ENCODE measurements at regions of chr20 and their contacts with region 1.

Region 1: DNA sequence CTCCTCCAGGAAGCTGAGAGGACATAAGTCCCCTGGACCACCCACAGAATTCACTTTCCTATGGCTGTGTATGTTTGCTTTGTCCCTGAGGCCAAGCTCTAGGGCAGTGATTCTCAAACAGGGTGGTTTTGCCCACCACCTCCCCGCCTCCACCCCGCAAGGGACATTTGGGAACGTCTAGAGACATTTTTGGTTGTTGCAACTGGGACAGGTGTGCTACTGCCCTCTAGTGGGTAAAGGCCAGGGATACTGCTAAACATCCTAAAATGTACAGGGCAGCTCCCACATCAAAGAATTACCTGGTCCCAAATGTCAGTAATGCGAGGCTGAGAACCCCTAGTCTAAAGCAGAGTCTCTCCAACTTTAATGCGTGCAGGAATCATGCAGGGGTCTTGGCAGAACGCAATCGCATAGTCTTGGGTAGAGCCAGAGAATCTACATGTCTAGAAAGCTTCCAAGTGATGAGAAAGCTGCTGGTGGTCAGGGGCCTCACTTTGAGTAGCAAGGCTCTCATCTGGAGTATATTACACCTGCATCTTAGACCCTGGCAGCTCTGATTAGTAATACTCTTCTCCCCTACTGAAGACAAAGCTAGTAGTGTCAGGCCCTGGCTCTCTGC is 5.1 kb downstream of the KCNS1 start:
- DNase-seq: peak; percentile 76
- ATAC-seq: peak; percentile 44
- H3K4me3 Mint-ChIP-seq: no peak overlapping the region
- H3K27ac Mint-ChIP-seq: no peak overlapping the region
- H3K4me1 Mint-ChIP-seq: peaks cover 11% of the 10 kb centered on the region
- H3K27me3 Mint-ChIP-seq: peaks cover 30% of the 10 kb centered on the region

Region 2: GRCh38 chr20:44683263-44684046 is 412.4 kb before region 1 on chr20:
- CTCF ChIA-PET with region 1: interaction called, 5 read pairs
- POLR2A ChIA-PET with region 1: no interaction called
- intact Hi-C with region 1: loop called in 1 of 2 experiments (anchors 10 kb)
- DNase-seq: peak; percentile 69
- ATAC-seq: peak; percentile 79
- H3K4me3 Mint-ChIP-seq: no peak overlapping the region
- H3K27ac Mint-ChIP-seq: no peak overlapping the region
- H3K4me1 Mint-ChIP-seq: no peaks in the 10 kb centered on the region
- H3K27me3 Mint-ChIP-seq: no peaks in the 10 kb centered on the region

Region 3: DNA sequence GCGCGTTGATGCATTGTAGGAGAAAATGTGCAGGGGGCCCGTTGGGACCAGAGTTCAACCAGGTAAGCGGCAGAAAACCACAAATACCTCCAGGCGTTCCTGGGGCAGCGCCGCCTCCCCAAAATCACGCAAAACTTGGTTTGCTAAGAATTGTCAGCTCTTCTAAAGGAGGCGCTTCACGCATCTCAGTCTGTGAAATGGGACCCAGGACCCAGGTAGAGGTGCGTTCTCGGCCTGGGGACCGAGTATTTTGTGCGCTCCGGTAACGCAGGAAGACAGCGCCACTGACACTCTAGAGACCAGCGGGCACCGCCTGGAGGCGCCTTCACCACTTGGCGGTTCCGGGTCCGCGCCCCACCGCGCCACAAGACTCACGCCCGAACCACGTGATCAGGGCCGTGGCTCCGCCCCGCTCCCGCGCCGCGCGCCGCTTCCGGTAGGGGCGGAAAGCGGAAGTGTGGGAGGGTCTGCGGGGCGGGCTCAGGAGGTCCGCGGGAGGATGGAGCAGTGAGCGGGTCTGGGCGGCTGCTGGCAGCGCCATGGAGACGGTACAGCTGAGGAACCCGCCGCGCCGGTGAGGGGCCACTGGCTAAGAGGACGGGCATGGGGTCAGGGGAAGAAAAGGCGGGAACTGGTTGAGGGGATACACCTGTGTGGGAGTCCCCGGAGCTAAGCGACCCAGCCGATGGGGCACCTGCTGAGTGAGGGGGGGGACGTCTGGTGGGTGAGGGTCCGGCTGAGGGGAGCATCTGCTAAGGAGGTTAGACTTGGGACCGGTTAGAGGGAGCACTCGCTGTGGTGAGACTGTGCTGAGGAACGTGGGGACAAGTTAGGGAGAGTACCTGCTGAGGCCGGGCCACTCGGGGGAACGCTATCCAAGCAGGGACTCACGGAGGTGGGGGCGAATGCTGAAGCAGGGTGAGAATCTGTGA is 129.6 kb before region 1 on chr20 and contains the start of gene STK4:
- CTCF ChIA-PET with region 1: no interaction called
- POLR2A ChIA-PET with region 1: interaction called, 3 read pairs
- intact Hi-C with region 1: loop called in 1 of 2 experiments (anchors 5 kb)
- DNase-seq: peak; percentile 97
- ATAC-seq: peak; percentile 71
- H3K4me3 Mint-ChIP-seq: peak within 1 kb of the TSS; percentile 94
- H3K27ac Mint-ChIP-seq: peak within 1 kb of the TSS; percentile 98
- H3K4me1 Mint-ChIP-seq: peaks cover 55% of the 10 kb centered on the region
- H3K27me3 Mint-ChIP-seq: no peaks in the 10 kb centered on the region
- total RNA-seq, gene STK4: 156 to 164 TPM

Region 4: DNA sequence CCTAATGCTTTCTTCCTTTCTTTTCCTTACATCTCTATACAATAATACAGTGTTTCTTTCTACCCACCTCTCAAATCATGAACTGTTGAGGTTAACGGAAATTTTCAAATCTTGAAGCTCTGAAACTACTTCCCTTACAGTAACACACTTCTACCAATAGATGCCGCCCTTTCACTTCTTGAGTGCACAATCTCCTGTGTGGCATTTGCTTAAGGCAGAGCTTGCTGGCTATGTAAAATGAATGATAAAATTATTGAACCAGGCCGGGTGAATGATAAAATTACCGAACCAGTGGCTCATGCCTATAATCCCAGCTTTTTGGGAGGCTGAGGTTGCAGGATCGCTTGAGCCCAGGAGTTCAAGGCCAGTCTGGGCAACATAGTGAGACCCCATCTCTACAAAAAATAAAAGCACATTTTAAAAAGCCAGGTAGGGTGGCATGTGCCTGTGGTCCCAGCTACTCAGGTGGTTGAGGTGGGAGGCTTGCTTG is 51.7 kb before region 1 on chr20:
- CTCF ChIA-PET with region 1: interaction called, 136 read pairs
- POLR2A ChIA-PET with region 1: interaction called, 7 read pairs
- intact Hi-C with region 1: loop called (anchors 1 kb)
- DNase-seq: peak; percentile 52
- ATAC-seq: peak; percentile 86
- H3K4me3 Mint-ChIP-seq: no peak overlapping the region
- H3K27ac Mint-ChIP-seq: peak overlapping the region; percentile 93
- H3K4me1 Mint-ChIP-seq: peaks cover 76% of the 10 kb centered on the region
- H3K27me3 Mint-ChIP-seq: no peaks in the 10 kb centered on the region

Region 5: DNA sequence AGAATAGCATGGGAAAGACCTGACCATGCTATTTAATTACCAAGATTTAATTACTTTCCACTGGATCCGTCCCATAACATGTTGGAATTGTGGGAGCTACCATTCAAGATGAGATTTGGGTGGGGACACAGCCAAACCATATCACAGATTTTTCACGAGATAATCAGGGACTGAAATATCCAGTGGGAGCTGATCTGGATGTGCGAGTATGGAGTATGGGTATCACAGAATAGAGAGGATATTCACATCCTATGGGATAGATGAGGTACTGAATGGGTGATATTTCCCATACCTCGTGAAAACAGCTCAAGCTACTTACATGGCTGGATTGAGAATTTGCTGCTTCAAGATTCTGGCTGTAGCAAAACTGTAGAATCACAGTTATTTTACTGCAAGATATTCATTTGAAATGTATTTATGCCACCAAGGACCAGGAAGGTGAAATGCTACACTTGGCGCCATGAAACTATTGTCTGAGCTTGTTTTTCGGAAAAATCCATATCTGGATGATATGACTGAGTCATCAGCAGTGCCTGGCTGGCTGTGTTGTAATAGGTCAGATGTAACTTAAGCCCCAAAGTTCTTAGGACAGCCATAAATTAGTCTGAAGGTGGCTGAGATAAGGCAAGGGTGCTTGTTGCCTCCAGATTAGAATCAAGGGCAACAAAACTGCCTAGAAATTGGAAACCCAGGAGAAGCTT is 24.8 kb before region 1 on chr20:
- CTCF ChIA-PET with region 1: interaction called, 29 read pairs
- POLR2A ChIA-PET with region 1: no interaction called
- intact Hi-C with region 1: no loop called
- DNase-seq: no peak
- ATAC-seq: no peak
- H3K4me3 Mint-ChIP-seq: no peak overlapping the region
- H3K27ac Mint-ChIP-seq: peak overlapping the region; percentile 66
- H3K4me1 Mint-ChIP-seq: peaks cover 48% of the 10 kb centered on the region
- H3K27me3 Mint-ChIP-seq: no peaks in the 10 kb centered on the region

Region 6: GRCh38 chr20:45138561-45139300 is 42.9 kb after region 1 on chr20:
- CTCF ChIA-PET with region 1: interaction called, 13 read pairs
- POLR2A ChIA-PET with region 1: no interaction called
- intact Hi-C with region 1: no loop called
- DNase-seq: peak; percentile 92
- ATAC-seq: peak; percentile 91
- H3K4me3 Mint-ChIP-seq: no peak overlapping the region
- H3K27ac Mint-ChIP-seq: no peak overlapping the region
- H3K4me1 Mint-ChIP-seq: no peaks in the 10 kb centered on the region
- H3K27me3 Mint-ChIP-seq: peaks cover 9% of the 10 kb centered on the region

Region 7: GRCh38 chr20:46607191-46607848 is 1511.5 kb after region 1 on chr20:
- CTCF ChIA-PET with region 1: no interaction called
- POLR2A ChIA-PET with region 1: no interaction called
- intact Hi-C with region 1: no loop called
- DNase-seq: no peak
- ATAC-seq: no peak
- H3K4me3 Mint-ChIP-seq: no peak overlapping the region
- H3K27ac Mint-ChIP-seq: no peak overlapping the region
- H3K4me1 Mint-ChIP-seq: no peaks in the 10 kb centered on the region
- H3K27me3 Mint-ChIP-seq: peaks cover 4% of the 10 kb centered on the region